ENCODE measurements at regions of chr18 and their contacts with region 1.

Region 1: GRCh38 chr18:47756364-47757016 is 174.0 kb downstream of the SMAD2 start:
- DNase-seq: peak; percentile 31 to 62 (median 54)
- H3K4me3 ChIP-seq: no peak overlapping the region
- H3K27ac ChIP-seq: no peak overlapping the region
- H3K4me1 ChIP-seq: no peaks in the 10 kb centered on the region
- H3K27me3 ChIP-seq: peaks cover 0 to 6% (median 3%) of the 10 kb centered on the region in 5 experiments

Region 2: DNA sequence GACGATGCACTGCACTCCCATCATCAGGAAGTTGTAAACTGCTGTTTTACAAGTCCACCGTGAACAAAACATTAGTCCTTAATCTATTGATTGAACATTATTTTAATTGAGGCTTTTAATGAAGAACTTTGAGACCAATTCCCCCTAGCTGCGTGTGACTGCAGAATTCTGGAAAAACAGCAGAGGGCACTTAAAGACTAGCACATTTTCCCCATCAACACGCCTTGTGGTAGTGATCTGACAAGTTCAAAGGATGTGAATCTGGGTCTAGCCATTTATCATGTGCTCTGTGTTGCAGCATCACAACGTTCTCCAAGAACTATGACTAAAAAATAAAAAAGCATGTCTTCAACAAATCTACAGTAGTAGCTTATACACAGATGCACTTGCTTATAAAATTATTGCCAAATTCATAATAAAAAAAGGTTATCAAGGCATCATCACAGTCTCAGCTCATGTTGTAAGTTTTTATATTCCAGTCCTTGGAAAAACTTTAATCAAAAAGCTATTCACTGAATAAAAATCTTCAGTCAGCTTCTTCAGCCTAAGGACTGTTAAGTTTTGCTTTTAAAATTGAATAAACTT is 540.8 kb before region 1 on chr18:
- CTCF ChIA-PET with region 1: interaction called, 15 read pairs
- POLR2A ChIA-PET with region 1: no interaction called
- DNase-seq: peak; percentile 55 to 82 (median 79)
- H3K4me3 ChIP-seq: no peak overlapping the region
- H3K27ac ChIP-seq: no peak overlapping the region
- H3K4me1 ChIP-seq: no peaks in the 10 kb centered on the region
- H3K27me3 ChIP-seq: peaks cover 11 to 48% (median 31%) of the 10 kb centered on the region in 5 experiments